GM12878 (cell line): ENCODE measurements at regions of chr9 and their contacts with region 1.

Region 1: GRCh38 chr9:69186841-69187611 is 12.9 kb downstream of the TJP2 start:
- DNase-seq: no peak
- ATAC-seq: no peak
- H3K4me3 ChIP-seq: no peak overlapping the region
- H3K27ac ChIP-seq: no peak overlapping the region
- H3K4me1 ChIP-seq: peaks cover 20% of the 10 kb centered on the region
- H3K27me3 ChIP-seq: no peaks in the 10 kb centered on the region
- CTCF ChIP-seq: no peak
- EP300 ChIP-seq: no peak
- POLR2A ChIP-seq: no peak
- RAD21 ChIP-seq: no peak

Region 2: GRCh38 chr9:69044240-69045219 is 142.5 kb before region 1 on chr9:
- CTCF ChIA-PET with region 1: interaction called, 289 read pairs
- POLR2A ChIA-PET with region 1: no interaction called
- RAD21 ChIA-PET with region 1: no interaction called
- SMC1A ChIA-PET with region 1: no interaction called
- in situ Hi-C with region 1: no loop called
- intact Hi-C with region 1: no loop called
- DNase-seq: no peak
- ATAC-seq: peak; percentile 39; the same call in 2 of the 3 replicates
- H3K4me3 ChIP-seq: no peak overlapping the region
- H3K27ac ChIP-seq: no peak overlapping the region
- H3K4me1 ChIP-seq: peaks cover 3% of the 10 kb centered on the region; the same call in 1 of the 2 replicates
- H3K27me3 ChIP-seq: no peaks in the 10 kb centered on the region
- CTCF ChIP-seq: no peak
- EP300 ChIP-seq: no peak
- POLR2A ChIP-seq: no peak
- RAD21 ChIP-seq: no peak

Region 3: DNA sequence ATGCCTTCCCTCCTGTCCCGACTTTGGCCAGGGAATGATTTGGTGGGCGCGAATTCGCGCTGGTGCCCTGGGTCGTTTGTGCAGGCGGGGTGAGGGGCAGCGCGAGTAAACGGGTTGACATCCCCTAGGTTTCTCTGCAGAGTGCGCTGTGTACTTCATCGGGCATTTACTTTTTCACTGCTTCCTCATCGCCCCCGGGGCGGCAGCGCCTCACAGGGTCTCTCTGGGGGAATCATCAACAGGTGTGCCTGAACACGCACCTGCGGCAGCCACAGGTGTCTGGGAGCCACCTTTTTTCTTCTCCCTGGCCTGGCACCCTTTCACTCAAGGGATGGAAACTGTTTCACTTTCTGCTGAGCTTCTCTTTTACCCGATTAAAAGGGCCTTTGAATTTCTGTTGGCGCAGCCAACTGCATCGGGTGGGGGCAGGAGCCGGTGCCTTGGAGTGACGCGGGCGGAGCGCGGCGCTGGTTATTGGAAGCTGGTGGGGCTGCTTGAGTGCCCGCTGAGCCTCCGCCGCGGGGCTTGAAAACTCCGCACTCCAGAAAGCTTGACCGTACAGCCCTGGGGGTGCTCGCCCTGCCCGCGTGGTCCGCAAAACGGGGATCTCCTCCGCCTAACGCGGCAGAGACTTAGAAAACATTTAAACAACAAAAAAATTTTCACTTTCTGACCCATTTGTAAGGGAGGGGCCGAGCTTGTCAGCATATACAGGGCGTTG is 65.0 kb before region 1 on chr9:
- CTCF ChIA-PET with region 1: no interaction called
- POLR2A ChIA-PET with region 1: no interaction called
- RAD21 ChIA-PET with region 1: interaction called, 4 read pairs
- SMC1A ChIA-PET with region 1: no interaction called
- in situ Hi-C with region 1: no loop called
- intact Hi-C with region 1: loop called (anchors 5 kb)
- DNase-seq: no peak
- ATAC-seq: peak; percentile 79
- H3K4me3 ChIP-seq: peak overlapping the region; percentile 88
- H3K27ac ChIP-seq: no peak overlapping the region
- H3K4me1 ChIP-seq: no peaks in the 10 kb centered on the region
- H3K27me3 ChIP-seq: peaks cover 0 to 3% of the 10 kb centered on the region in 2 experiments; a peak in 1 of 4 replicates
- CTCF ChIP-seq: peak in 2 of 3 experiments; percentile 1 to 24; a peak in 1 of 6 replicates
- EP300 ChIP-seq: no peak
- POLR2A ChIP-seq: no peak
- RAD21 ChIP-seq: peak; percentile 31; the same call in 1 of the 2 replicates